Cardiac septum (tissue), 1 donor: ENCODE measurements at regions of chr1 and their contacts with region 1.

Region 1: GRCh38 chr1:201511941-201512539 is 5.1 kb upstream of the CSRP1 start:
- DNase-seq: no peak

Region 2: GRCh38 chr1:201481761-201482493 is 30.1 kb before region 1 on chr1:
- intact Hi-C with region 1: loop called (anchors 1 kb)
- DNase-seq: peak; percentile 93